ENCODE measurements at regions of chr1 and their contacts with region 1.

Region 1: GRCh38 chr1:212045981-212046380 is 10.4 kb downstream of the DTL start:
- DNase-seq: no peak
- ATAC-seq: no peak
- H3K4me3 ChIP-seq: no peak overlapping the region
- H3K4me3 Mint-ChIP-seq: no peak overlapping the region
- H3K27ac ChIP-seq: no peak overlapping the region
- H3K27ac Mint-ChIP-seq: no peak overlapping the region
- H3K4me1 ChIP-seq: no peaks in the 10 kb centered on the region
- H3K4me1 Mint-ChIP-seq: peaks cover 2% of the 10 kb centered on the region
- H3K27me3 ChIP-seq: no peaks in the 10 kb centered on the region
- H3K27me3 Mint-ChIP-seq: no peaks in the 10 kb centered on the region
- CTCF ChIP-seq: no peak

Region 2: DNA sequence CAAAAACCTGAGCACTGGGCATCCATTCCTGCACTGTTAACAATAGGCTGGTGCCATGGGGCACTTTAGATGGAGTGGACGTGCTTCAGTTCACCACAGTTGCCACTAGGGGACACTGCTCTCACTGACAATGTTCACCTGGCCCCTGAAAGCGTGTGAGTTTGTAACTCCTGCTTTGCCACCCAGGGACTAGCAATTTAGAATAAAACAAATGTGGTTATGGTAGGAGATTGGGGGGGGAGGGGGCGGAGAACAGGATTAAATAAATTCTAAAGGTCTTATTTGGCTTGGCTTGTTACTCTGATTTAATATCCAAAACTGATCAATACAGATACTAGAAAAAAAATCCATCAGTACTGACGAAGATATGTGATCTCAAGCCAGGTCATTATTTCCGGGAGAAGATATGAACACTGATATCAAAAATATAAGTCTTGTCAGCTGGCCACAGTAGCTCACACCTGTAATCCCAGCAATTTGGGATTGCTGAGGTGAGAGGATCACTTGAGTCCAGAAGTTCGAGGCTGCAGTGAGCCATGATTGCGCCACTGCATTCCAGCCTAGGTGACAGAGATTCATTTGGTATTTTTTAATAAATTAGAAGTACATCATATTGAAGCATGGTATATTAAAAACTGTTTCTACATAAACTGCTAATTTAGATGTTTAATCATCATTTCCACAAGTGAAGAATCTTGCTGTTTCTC is 33.8 kb before region 1 on chr1:
- CTCF ChIA-PET with region 1: no interaction called
- POLR2A ChIA-PET with region 1: no interaction called
- intact Hi-C with region 1: loop called in 1 of 2 experiments (anchors 5 kb)
- DNase-seq: peak; percentile 39 to 80 (median 51)
- ATAC-seq: peak; percentile 100
- H3K4me3 ChIP-seq: no peak overlapping the region
- H3K4me3 Mint-ChIP-seq: no peak overlapping the region
- H3K27ac ChIP-seq: no peak overlapping the region
- H3K27ac Mint-ChIP-seq: no peak overlapping the region
- H3K4me1 ChIP-seq: no peaks in the 10 kb centered on the region
- H3K4me1 Mint-ChIP-seq: no peaks in the 10 kb centered on the region
- H3K27me3 ChIP-seq: no peaks in the 10 kb centered on the region
- H3K27me3 Mint-ChIP-seq: no peaks in the 10 kb centered on the region
- CTCF ChIP-seq: peak; percentile 89

Region 3: DNA sequence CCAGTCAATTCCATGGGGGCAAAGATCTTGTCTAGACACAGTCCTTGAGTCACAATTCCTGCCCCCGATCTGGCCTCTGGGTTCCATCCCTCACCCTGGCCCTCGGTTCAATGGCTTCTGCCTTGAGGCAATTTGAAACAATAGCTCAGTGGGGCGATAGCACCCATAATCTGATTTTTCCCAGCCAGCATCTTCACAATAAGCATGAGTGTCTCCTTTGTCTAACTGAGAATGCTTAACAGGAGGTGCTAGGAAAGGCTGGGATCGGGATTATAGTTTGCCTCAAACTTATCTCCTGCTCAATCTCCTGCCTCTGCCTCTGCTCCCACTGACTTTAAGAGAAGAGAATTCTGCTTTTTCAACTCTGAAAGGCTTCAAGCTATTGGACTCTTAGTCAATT is 1647.9 kb after region 1 on chr1:
- CTCF ChIA-PET with region 1: no interaction called
- POLR2A ChIA-PET with region 1: no interaction called
- intact Hi-C with region 1: no loop called
- DNase-seq: no peak
- ATAC-seq: no peak
- H3K4me3 ChIP-seq: no peak overlapping the region
- H3K4me3 Mint-ChIP-seq: no peak overlapping the region
- H3K27ac ChIP-seq: no peak overlapping the region
- H3K27ac Mint-ChIP-seq: no peak overlapping the region
- H3K4me1 ChIP-seq: no peaks in the 10 kb centered on the region
- H3K4me1 Mint-ChIP-seq: no peaks in the 10 kb centered on the region
- H3K27me3 ChIP-seq: no peaks in the 10 kb centered on the region
- H3K27me3 Mint-ChIP-seq: no peaks in the 10 kb centered on the region
- CTCF ChIP-seq: no peak